ENCODE measurements at regions of chr11 and their contacts with region 1.

Region 1: DNA sequence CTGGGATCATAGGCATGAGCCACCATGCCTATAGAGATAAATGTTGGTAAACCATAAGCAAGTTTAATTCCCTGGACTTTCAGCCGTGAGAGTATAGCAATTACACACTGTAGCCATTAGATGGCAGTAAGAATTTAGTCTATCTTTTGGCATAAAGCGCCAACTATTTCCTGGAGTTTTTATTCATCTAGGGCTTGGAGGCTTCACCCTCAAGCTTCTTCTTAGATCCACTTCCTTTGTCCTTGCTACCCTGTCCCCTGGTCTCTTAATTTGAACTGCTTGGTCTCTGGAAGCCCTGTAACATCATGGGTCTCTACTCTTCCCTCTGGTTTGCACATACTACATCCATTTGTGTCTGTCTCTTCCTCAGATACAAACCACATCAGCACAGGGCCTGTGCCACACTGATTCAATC is 38.2 kb downstream of the OR10A6 start:
- DNase-seq: no peak
- ATAC-seq: peak; percentile 46

Region 2: GRCh38 chr11:7986768-7987559 is 94.1 kb after region 1 on chr11 and contains the start of gene EIF3F:
- intact Hi-C with region 1: loop called (anchors 5 kb)
- DNase-seq: peak; percentile 89
- ATAC-seq: peak; percentile 99
- total RNA-seq, gene EIF3F: 137 TPM